B cell (primary cell): ENCODE measurements at regions of chr1 and their contacts with region 1.

Region 1: GRCh38 chr1:179002552-179003345 is 22.9 kb upstream of the FAM20B start:
- DNase-seq: peak; percentile 82
- ATAC-seq: peak; percentile 96
- H3K4me3 ChIP-seq: no peak overlapping the region
- H3K4me3 Mint-ChIP-seq: no peak overlapping the region
- H3K27ac ChIP-seq: no peak overlapping the region
- H3K27ac Mint-ChIP-seq: peak overlapping the region; percentile 10
- H3K4me1 ChIP-seq: peaks cover 7 to 22% of the 10 kb centered on the region in 2 donors
- H3K4me1 Mint-ChIP-seq: peaks cover 14% of the 10 kb centered on the region
- H3K27me3 ChIP-seq: no peaks in the 10 kb centered on the region
- H3K27me3 Mint-ChIP-seq: no peaks in the 10 kb centered on the region
- CTCF ChIP-seq: peak; percentile 97

Region 2: DNA sequence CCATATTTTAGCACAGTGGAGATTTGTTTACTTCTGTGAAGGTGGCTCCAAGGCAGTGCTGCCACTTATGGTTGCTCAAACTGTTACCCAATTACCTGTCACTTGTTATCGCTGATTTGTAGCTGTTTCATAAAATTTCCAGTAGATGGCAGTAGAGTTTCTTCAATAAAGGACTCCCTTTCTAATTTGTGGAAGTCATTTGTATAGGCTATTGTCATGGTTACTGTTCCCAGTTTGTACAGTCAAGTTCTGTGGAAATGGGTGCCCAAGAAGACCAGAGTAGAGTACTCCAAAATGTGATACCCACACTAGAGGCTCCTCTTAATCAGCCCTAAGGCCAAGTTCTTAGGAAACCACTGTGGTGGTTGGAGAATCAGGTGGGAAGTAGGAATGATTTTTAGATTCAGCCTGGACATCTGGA is 692.1 kb before region 1 on chr1:
- CTCF ChIA-PET with region 1: interaction called, 66 read pairs
- POLR2A ChIA-PET with region 1: no interaction called
- intact Hi-C with region 1: no loop called
- DNase-seq: peak; percentile 70
- ATAC-seq: peak; percentile 45
- H3K4me3 ChIP-seq: no peak overlapping the region
- H3K4me3 Mint-ChIP-seq: no peak overlapping the region
- H3K27ac ChIP-seq: no peak overlapping the region
- H3K27ac Mint-ChIP-seq: no peak overlapping the region
- H3K4me1 ChIP-seq: no peaks in the 10 kb centered on the region
- H3K4me1 Mint-ChIP-seq: no peaks in the 10 kb centered on the region
- H3K27me3 ChIP-seq: peaks cover 0 to 3% (median 0%) of the 10 kb centered on the region in 4 experiments
- H3K27me3 Mint-ChIP-seq: peaks cover 10% of the 10 kb centered on the region
- CTCF ChIP-seq: peak; percentile 82

Region 3: GRCh38 chr1:178870944-178871343 is 131.8 kb before region 1 on chr1 and contains the start of gene ANGPTL1:
- CTCF ChIA-PET with region 1: interaction called, 16 read pairs
- POLR2A ChIA-PET with region 1: no interaction called
- intact Hi-C with region 1: no loop called
- DNase-seq: no peak
- ATAC-seq: no peak
- H3K4me3 ChIP-seq: no peak within 1 kb of the TSS
- H3K4me3 Mint-ChIP-seq: no peak within 1 kb of the TSS
- H3K27ac ChIP-seq: peak within 1 kb of the TSS in 1 of 2 donors; percentile 73
- H3K27ac Mint-ChIP-seq: peak within 1 kb of the TSS; percentile 85
- H3K4me1 ChIP-seq: peaks cover 0 to 13% of the 10 kb centered on the region in 2 donors
- H3K4me1 Mint-ChIP-seq: peaks cover 43% of the 10 kb centered on the region
- H3K27me3 ChIP-seq: no peaks in the 10 kb centered on the region
- H3K27me3 Mint-ChIP-seq: no peaks in the 10 kb centered on the region
- CTCF ChIP-seq: no peak
- total RNA-seq, gene ANGPTL1: not detected in 2 replicates

Region 4: GRCh38 chr1:178885869-178886268 is 116.9 kb before region 1 on chr1:
- CTCF ChIA-PET with region 1: interaction called, 12 read pairs
- POLR2A ChIA-PET with region 1: no interaction called
- intact Hi-C with region 1: loop called (anchors 5 kb)
- DNase-seq: no peak
- ATAC-seq: no peak
- H3K4me3 ChIP-seq: no peak overlapping the region
- H3K4me3 Mint-ChIP-seq: no peak overlapping the region
- H3K27ac ChIP-seq: peak overlapping the region in 1 of 2 donors; percentile 43
- H3K27ac Mint-ChIP-seq: no peak overlapping the region
- H3K4me1 ChIP-seq: no peaks in the 10 kb centered on the region
- H3K4me1 Mint-ChIP-seq: peaks cover 5% of the 10 kb centered on the region
- H3K27me3 ChIP-seq: no peaks in the 10 kb centered on the region
- H3K27me3 Mint-ChIP-seq: no peaks in the 10 kb centered on the region
- CTCF ChIP-seq: no peak

Region 5: DNA sequence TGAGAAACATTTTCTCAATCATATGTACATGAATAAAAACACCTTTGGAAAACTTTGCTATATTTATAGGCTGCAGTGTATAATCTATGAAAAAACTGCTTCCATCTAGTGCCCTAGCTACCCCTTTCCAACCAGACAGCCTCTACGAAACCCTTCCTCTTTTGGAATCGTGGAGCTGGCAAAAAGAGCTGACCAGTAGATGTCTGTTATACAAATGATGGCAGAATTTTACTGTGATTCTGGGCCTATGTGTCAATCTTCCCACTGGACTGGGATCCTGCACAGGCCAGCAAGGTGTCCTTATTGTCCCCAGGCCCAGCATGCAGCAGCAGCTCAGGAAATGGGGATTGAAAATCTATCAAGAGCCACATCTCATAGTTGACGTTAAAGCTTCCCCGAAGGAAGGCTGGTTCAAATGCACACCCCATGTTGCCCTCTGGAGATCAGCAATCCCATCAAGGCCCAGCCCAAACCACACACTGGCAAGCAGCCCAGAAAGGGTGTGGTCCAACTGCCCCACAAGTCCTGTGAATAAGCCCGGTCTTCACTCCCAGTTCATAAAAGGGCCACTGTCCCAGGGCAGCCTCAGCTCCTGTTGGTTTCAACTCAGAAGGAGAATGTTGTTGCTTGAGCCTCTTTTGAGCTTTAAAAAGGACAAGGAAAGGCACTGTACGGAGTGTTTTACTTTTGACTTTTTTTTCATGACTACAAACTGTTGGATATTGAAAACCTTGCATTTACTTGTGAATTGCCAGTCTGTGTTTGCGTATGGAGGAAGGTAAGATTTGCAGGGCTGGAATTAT is 14.2 kb after region 1 on chr1:
- CTCF ChIA-PET with region 1: interaction called, 19 read pairs
- POLR2A ChIA-PET with region 1: no interaction called
- intact Hi-C with region 1: no loop called
- DNase-seq: no peak
- ATAC-seq: no peak
- H3K4me3 ChIP-seq: no peak overlapping the region
- H3K4me3 Mint-ChIP-seq: no peak overlapping the region
- H3K27ac ChIP-seq: no peak overlapping the region
- H3K27ac Mint-ChIP-seq: no peak overlapping the region
- H3K4me1 ChIP-seq: no peaks in the 10 kb centered on the region
- H3K4me1 Mint-ChIP-seq: peaks cover 2% of the 10 kb centered on the region
- H3K27me3 ChIP-seq: peaks cover 0 to 3% (median 0%) of the 10 kb centered on the region in 4 experiments
- H3K27me3 Mint-ChIP-seq: no peaks in the 10 kb centered on the region
- CTCF ChIP-seq: no peak

Region 6: DNA sequence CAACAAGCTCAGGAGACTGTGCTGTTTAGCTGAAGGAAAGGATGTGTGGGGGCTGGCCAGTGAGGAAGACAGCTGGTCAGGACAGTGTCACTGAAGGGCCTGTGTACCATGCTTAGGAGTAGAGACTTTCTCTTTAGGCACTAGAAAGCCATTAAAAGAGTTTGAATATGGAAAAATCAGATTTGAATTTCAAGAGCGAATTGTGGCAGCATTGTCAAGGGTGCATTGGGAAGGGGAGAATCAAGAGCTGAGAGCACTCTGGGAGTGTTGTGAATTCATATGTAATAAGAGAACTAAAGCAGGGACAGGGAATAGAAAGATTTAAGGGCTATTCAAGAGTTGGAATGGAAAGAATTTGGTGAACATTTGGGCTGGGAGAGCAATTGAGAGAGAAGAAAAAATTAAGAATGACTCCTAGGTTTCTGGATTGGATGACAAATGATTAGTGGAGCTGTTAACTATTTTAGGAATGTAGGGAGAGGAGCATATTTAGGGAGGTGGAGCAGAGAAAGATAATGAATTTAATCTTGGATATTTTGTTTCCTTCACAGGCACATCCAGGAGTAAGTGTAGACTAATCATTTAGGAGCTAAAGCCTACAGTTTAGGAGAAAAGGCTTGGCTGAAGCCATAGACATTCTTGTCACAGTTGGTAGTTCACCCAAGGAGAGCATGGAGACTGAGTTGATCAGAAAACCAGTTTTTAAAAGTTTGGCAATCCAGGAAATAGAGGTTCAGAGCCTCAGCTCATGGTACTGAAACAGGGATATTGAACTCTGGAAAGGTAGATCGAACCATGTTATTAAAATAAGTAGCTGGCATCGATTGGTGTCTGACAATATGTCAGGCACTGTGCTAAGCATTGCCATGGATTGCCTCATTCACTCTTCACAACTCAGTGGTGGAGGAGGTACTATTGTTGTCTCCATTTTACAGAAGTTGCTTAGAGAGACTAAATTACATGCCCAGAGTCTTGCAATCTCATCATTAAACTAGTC is 56.0 kb after region 1 on chr1:
- CTCF ChIA-PET with region 1: no interaction called
- POLR2A ChIA-PET with region 1: no interaction called
- intact Hi-C with region 1: no loop called
- DNase-seq: no peak
- ATAC-seq: no peak
- H3K4me3 ChIP-seq: no peak overlapping the region
- H3K4me3 Mint-ChIP-seq: no peak overlapping the region
- H3K27ac ChIP-seq: no peak overlapping the region
- H3K27ac Mint-ChIP-seq: no peak overlapping the region
- H3K4me1 ChIP-seq: no peaks in the 10 kb centered on the region
- H3K4me1 Mint-ChIP-seq: no peaks in the 10 kb centered on the region
- H3K27me3 ChIP-seq: no peaks in the 10 kb centered on the region
- H3K27me3 Mint-ChIP-seq: no peaks in the 10 kb centered on the region
- CTCF ChIP-seq: no peak